B cell (primary cell): ENCODE measurements at regions of chr6 and their contacts with region 1.

Region 1: DNA sequence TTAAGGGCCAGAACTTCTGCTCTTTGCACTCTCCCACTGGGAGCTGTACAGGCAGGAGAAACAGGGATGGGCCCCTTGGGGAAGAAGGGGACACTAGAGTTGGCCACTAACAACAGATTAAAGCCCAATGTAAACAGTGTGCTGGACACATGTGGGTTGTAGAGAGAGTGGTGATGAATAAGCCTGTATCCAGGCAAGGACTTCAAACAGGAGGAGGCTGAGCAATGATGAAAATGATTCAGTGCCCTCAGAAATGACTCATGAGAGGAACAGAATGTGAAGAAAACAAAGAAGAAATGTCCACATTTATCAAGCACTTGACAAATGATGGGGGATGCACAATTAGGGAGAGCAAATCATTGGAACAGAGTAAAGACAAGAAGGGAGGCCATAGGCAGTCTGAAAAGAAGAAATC is 242.3 kb downstream of the TBX18 start:
- DNase-seq: no peak
- ATAC-seq: no peak
- H3K4me3 ChIP-seq: no peak overlapping the region
- H3K4me3 Mint-ChIP-seq: no peak overlapping the region
- H3K27ac ChIP-seq: no peak overlapping the region
- H3K27ac Mint-ChIP-seq: no peak overlapping the region
- H3K4me1 ChIP-seq: no peaks in the 10 kb centered on the region
- H3K4me1 Mint-ChIP-seq: no peaks in the 10 kb centered on the region
- H3K27me3 ChIP-seq: no peaks in the 10 kb centered on the region
- H3K27me3 Mint-ChIP-seq: no peaks in the 10 kb centered on the region
- CTCF ChIP-seq: no peak

Region 2: GRCh38 chr6:84442208-84442607 is 79.9 kb before region 1 on chr6:
- CTCF ChIA-PET with region 1: no interaction called
- POLR2A ChIA-PET with region 1: no interaction called
- intact Hi-C with region 1: no loop called
- DNase-seq: no peak
- ATAC-seq: no peak
- H3K4me3 ChIP-seq: no peak overlapping the region
- H3K4me3 Mint-ChIP-seq: no peak overlapping the region
- H3K27ac ChIP-seq: no peak overlapping the region
- H3K27ac Mint-ChIP-seq: no peak overlapping the region
- H3K4me1 ChIP-seq: no peaks in the 10 kb centered on the region
- H3K4me1 Mint-ChIP-seq: no peaks in the 10 kb centered on the region
- H3K27me3 ChIP-seq: no peaks in the 10 kb centered on the region
- H3K27me3 Mint-ChIP-seq: no peaks in the 10 kb centered on the region
- CTCF ChIP-seq: no peak

Region 3: GRCh38 chr6:84466511-84466910 is 55.6 kb before region 1 on chr6:
- CTCF ChIA-PET with region 1: no interaction called
- POLR2A ChIA-PET with region 1: no interaction called
- intact Hi-C with region 1: no loop called
- DNase-seq: no peak
- ATAC-seq: no peak
- H3K4me3 ChIP-seq: no peak overlapping the region
- H3K4me3 Mint-ChIP-seq: no peak overlapping the region
- H3K27ac ChIP-seq: no peak overlapping the region
- H3K27ac Mint-ChIP-seq: no peak overlapping the region
- H3K4me1 ChIP-seq: no peaks in the 10 kb centered on the region
- H3K4me1 Mint-ChIP-seq: no peaks in the 10 kb centered on the region
- H3K27me3 ChIP-seq: no peaks in the 10 kb centered on the region
- H3K27me3 Mint-ChIP-seq: no peaks in the 10 kb centered on the region
- CTCF ChIP-seq: no peak

Region 4: GRCh38 chr6:84492241-84493165 is 29.6 kb before region 1 on chr6:
- CTCF ChIA-PET with region 1: no interaction called
- POLR2A ChIA-PET with region 1: no interaction called
- intact Hi-C with region 1: loop called (anchors 1 kb)
- DNase-seq: no peak
- ATAC-seq: no peak
- H3K4me3 ChIP-seq: no peak overlapping the region
- H3K4me3 Mint-ChIP-seq: no peak overlapping the region
- H3K27ac ChIP-seq: no peak overlapping the region
- H3K27ac Mint-ChIP-seq: no peak overlapping the region
- H3K4me1 ChIP-seq: no peaks in the 10 kb centered on the region
- H3K4me1 Mint-ChIP-seq: no peaks in the 10 kb centered on the region
- H3K27me3 ChIP-seq: no peaks in the 10 kb centered on the region
- H3K27me3 Mint-ChIP-seq: no peaks in the 10 kb centered on the region
- CTCF ChIP-seq: no peak